GM18951 (cell line): ENCODE measurements at regions of chr19 and their contacts with region 1.

Region 1: DNA sequence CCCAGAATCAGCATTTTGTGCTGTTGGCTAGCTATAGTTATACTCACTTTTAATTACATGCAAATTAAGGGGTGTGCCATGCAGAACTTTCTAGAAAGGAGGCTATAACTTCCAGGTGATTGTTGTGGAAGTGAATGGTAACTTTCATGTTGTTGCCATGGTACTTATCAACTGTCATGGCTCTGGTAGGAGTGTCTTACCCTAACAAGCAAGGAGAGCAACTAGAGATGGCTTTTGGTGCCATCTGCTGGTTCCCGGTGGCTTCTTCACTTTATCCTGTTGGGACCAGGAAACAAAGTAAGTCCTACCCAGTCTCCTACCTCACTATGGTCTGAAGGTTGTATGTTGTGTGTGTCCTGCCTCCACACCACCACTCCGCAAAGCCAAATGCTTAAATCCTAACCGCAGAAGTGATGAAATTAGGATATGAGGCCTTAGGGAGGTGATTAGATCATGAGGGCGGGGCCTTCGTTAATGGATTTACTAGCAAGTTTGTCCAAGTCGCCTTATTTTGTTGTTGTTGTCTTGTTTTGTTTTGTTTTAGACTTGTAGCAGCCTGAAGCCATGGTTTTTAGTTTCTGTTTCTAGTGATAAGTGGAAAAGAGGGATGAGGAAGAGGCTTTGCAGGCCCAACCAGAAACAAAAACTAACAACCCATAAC is 22.6 kb downstream of the FBXL12 start:
- POLR2A ChIP-seq: no peak

Region 2: GRCh38 chr19:9627856-9628255 is 168.4 kb before region 1 on chr19:
- in situ Hi-C with region 1: loop called (anchors 5 kb)
- POLR2A ChIP-seq: no peak

Region 3: GRCh38 chr19:9751446-9751845 is 44.8 kb before region 1 on chr19:
- in situ Hi-C with region 1: no loop called
- POLR2A ChIP-seq: no peak

Region 4: DNA sequence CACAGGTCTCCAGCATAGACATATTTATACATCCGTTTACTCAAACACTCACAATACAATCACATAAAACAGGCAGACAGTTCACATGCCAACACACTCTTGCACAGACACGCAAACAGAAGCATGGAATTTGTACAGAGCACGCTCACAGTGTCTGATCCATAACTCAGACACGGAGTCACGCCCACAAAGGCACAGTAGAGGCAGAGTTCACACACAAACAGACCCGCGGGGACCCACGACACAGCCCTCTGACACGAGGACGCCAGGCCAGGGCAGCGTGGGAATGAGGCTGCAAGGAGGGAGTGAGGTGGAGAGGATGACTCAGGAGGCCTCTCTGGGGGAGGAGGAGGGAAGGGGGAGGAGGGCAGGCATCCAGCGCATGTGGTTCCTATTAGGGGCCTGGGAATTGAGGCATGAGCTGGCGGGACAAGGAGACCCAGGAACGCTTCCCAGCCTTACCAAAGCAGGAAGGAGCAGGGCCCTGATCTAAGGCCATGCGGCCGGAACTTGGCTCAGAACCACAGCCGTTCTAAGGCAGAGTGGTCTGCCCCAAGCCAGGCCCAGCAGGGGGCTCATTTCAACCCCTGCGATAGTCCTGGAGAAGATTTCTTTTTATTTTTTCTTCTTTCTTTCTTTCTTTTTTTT is 149.2 kb after region 1 on chr19:
- in situ Hi-C with region 1: no loop called
- POLR2A ChIP-seq: no peak